IMR-90 (cell line): ENCODE measurements at regions of chr1 and their contacts with region 1.

Region 1: DNA sequence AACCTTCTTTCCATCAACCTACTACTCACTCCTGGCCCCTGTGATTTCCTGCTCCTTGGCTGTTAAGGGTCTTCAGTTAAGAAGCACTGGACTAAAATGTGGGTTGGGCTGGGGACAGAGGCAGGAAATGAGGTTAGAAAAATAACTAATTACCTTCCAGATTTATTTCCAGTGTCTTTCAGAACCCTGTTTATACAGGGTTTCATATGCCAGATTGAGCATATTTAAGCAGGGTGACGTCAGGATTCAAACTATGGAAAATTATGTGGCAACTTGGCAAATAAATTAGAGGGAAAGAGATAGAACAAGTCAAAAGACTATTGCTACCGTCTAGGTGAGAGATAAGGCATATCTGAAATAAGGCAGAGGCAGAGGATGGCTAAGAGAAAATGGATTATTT is 11.7 kb upstream of the MCOLN3 start:
- DNase-seq: no peak
- ATAC-seq: no peak
- H3K4me3 ChIP-seq: no peak overlapping the region
- H3K27ac ChIP-seq: no peak overlapping the region
- H3K4me1 ChIP-seq: no peaks in the 10 kb centered on the region
- H3K27me3 ChIP-seq: peaks cover 5% of the 10 kb centered on the region
- CTCF ChIP-seq: no peak
- POLR2A ChIP-seq: no peak
- RAD21 ChIP-seq: no peak

Region 2: GRCh38 chr1:84936116-84936810 is 123.8 kb before region 1 on chr1:
- CTCF ChIA-PET with region 1: no interaction called
- POLR2A ChIA-PET with region 1: no interaction called
- dilution Hi-C with region 1: no loop called
- in situ Hi-C with region 1: no loop called
- intact Hi-C with region 1: no loop called
- DNase-seq: peak; percentile 72
- ATAC-seq: peak; percentile 92
- H3K4me3 ChIP-seq: no peak overlapping the region
- H3K27ac ChIP-seq: no peak overlapping the region
- H3K4me1 ChIP-seq: peaks cover 2% of the 10 kb centered on the region; the same call in 1 of the 2 replicates
- H3K27me3 ChIP-seq: peaks cover 12% of the 10 kb centered on the region
- CTCF ChIP-seq: peak; percentile 95
- POLR2A ChIP-seq: no peak
- RAD21 ChIP-seq: peak; percentile 96

Region 3: DNA sequence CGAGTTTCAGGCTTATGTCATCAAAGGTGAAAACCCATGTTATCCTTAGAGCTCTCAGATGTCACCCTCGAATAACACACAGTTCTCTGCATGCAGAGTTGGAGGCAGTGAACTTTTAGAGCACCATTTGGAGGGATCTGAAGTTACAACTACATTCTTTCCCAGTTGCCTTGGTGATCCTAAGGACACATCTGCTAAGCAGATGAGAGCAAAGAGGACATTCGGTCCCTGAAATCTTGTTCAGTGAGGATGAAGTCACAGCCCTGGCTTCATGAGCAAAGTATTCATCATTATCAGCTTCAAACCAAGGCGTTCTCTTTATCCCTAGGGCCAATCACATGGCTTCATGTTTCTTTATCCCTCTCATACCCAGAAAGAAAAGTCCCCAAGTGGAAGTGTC is 40.0 kb before region 1 on chr1:
- CTCF ChIA-PET with region 1: no interaction called
- POLR2A ChIA-PET with region 1: no interaction called
- dilution Hi-C with region 1: no loop called
- in situ Hi-C with region 1: no loop called
- intact Hi-C with region 1: loop called (anchors 1 kb)
- DNase-seq: peak; percentile 10
- ATAC-seq: no peak
- H3K4me3 ChIP-seq: no peak overlapping the region
- H3K27ac ChIP-seq: no peak overlapping the region
- H3K4me1 ChIP-seq: no peaks in the 10 kb centered on the region
- H3K27me3 ChIP-seq: peaks cover 31% of the 10 kb centered on the region
- CTCF ChIP-seq: no peak
- POLR2A ChIP-seq: no peak
- RAD21 ChIP-seq: no peak

Region 4: GRCh38 chr1:85091671-85092280 is 31.7 kb after region 1 on chr1:
- CTCF ChIA-PET with region 1: no interaction called
- POLR2A ChIA-PET with region 1: no interaction called
- dilution Hi-C with region 1: no loop called
- in situ Hi-C with region 1: no loop called
- intact Hi-C with region 1: no loop called
- DNase-seq: no peak
- ATAC-seq: no peak
- H3K4me3 ChIP-seq: no peak overlapping the region
- H3K27ac ChIP-seq: no peak overlapping the region
- H3K4me1 ChIP-seq: no peaks in the 10 kb centered on the region
- H3K27me3 ChIP-seq: peaks cover 11% of the 10 kb centered on the region
- CTCF ChIP-seq: no peak
- POLR2A ChIP-seq: no peak
- RAD21 ChIP-seq: no peak